Caco-2 (cell line): ENCODE measurements at regions of chr16 and their contacts with region 1.

Region 1: GRCh38 chr16:85420501-85421337 is 192.4 kb upstream of the GSE1 start:
- DNase-seq: peak; percentile 39 to 67
- H3K4me3 ChIP-seq: no peak overlapping the region
- H3K4me3 Mint-ChIP-seq: no peak overlapping the region
- H3K27ac Mint-ChIP-seq: peak overlapping the region; percentile 49
- H3K4me1 ChIP-seq: peaks cover 39% of the 10 kb centered on the region
- H3K4me1 Mint-ChIP-seq: peaks cover 10% of the 10 kb centered on the region
- H3K27me3 ChIP-seq: no peaks in the 10 kb centered on the region
- H3K27me3 Mint-ChIP-seq: no peaks in the 10 kb centered on the region
- CTCF ChIP-seq: peak; percentile 75 to 98

Region 2: GRCh38 chr16:85137323-85138072 is 283.2 kb before region 1 on chr16:
- CTCF ChIA-PET with region 1: no interaction called
- POLR2A ChIA-PET with region 1: no interaction called
- intact Hi-C with region 1: no loop called
- DNase-seq: peak; percentile 81
- H3K4me3 ChIP-seq: no peak overlapping the region
- H3K4me3 Mint-ChIP-seq: peak overlapping the region; percentile 67
- H3K27ac Mint-ChIP-seq: peak overlapping the region; percentile 19
- H3K4me1 ChIP-seq: peaks cover 13% of the 10 kb centered on the region
- H3K4me1 Mint-ChIP-seq: peaks cover 24% of the 10 kb centered on the region
- H3K27me3 ChIP-seq: no peaks in the 10 kb centered on the region
- H3K27me3 Mint-ChIP-seq: no peaks in the 10 kb centered on the region
- CTCF ChIP-seq: no peak

Region 3: GRCh38 chr16:85437166-85438055 is 16.7 kb after region 1 on chr16:
- CTCF ChIA-PET with region 1: interaction called, 59 read pairs
- POLR2A ChIA-PET with region 1: interaction called, 25 read pairs
- intact Hi-C with region 1: loop called (anchors 1 kb)
- DNase-seq: peak; percentile 89 to 93
- H3K4me3 ChIP-seq: peak overlapping the region; percentile 29
- H3K4me3 Mint-ChIP-seq: peak overlapping the region; percentile 76
- H3K27ac Mint-ChIP-seq: peak overlapping the region; percentile 92
- H3K4me1 ChIP-seq: peaks cover 43% of the 10 kb centered on the region
- H3K4me1 Mint-ChIP-seq: peaks cover 17% of the 10 kb centered on the region
- H3K27me3 ChIP-seq: no peaks in the 10 kb centered on the region
- H3K27me3 Mint-ChIP-seq: no peaks in the 10 kb centered on the region
- CTCF ChIP-seq: no peak

Region 4: DNA sequence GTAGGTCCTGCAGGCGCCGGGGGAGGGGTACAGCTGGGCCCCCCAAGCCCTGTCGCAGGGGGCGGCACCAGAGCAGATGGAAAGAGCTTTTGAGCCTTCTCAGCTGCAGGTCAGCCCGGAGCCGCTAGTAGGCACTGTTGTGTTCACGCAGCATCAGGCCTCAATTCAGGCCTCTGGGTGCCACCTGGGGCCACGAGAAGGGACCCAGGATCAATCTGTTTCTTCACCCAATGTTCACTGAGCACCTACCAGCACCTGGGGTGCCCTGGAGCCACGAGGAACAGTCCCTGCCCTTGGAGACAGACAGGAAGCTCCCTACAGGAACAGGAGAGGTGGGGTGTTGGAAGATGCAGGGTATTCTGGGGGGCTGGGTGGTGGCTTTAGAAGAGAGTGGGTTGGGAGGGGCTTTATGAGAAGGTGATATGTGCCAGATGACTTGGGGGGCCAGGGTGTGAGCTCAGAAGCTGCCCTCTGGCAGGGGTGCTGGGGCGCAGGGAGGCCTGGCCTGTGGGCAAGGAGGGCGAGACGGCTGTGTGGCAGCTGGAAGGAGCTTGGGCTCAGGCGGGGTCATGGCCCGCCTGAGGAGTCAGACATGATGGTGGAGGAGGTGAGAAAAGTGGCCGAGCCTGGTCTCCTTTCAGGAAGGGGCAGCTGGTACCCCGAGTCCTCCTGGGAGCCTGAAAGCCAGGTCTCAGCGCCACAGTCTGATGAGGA is 70.5 kb after region 1 on chr16:
- CTCF ChIA-PET with region 1: interaction called, 6 read pairs
- POLR2A ChIA-PET with region 1: no interaction called
- intact Hi-C with region 1: loop called (anchors 1 kb)
- DNase-seq: peak in 1 of 2 experiments; percentile 34
- H3K4me3 ChIP-seq: no peak overlapping the region
- H3K4me3 Mint-ChIP-seq: peak overlapping the region; percentile 62
- H3K27ac Mint-ChIP-seq: peak overlapping the region; percentile 88
- H3K4me1 ChIP-seq: peaks cover 30% of the 10 kb centered on the region
- H3K4me1 Mint-ChIP-seq: peaks cover 34% of the 10 kb centered on the region
- H3K27me3 ChIP-seq: no peaks in the 10 kb centered on the region
- H3K27me3 Mint-ChIP-seq: no peaks in the 10 kb centered on the region
- CTCF ChIP-seq: peak; percentile 40 to 63

Region 5: DNA sequence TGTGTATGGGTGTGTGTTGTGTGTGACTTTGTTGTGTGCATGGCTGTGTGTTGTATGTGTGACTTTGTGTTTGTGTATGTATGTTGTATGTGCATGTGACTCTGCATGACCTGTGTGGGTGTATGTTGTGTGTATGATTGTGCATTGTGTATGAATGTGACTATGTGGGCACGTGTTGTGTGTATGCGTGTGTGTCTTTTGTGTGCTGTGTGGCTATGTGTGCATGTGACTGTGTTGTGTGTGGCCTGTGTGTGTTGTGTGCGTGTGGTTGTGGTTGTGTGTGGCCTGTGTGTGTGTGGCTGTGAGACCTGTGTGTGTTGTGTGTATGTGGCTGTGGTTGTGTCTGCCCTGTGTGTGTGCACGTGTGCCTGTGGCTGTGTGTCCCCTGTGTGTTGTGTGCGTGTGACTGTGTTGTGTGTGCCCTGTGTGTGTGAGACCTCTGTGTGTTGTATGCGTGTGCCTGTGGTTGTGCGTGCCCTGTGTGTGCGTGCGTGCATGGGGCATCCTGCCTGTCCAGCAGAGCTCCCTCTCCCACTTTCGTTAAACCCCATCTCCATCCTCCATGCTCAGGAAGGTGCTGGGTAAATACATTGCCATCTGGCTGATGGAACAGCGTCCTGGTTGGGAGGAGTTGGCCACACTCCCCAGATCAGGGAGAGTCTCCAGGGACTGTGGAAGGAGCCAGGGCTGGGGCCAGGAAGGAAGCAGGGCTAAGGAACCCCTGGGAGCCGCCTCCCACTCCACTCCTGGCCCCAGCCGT is 102.3 kb after region 1 on chr16:
- CTCF ChIA-PET with region 1: interaction called, 4 read pairs
- POLR2A ChIA-PET with region 1: no interaction called
- intact Hi-C with region 1: loop called (anchors 1 kb)
- DNase-seq: no peak
- H3K4me3 ChIP-seq: no peak overlapping the region
- H3K4me3 Mint-ChIP-seq: peak overlapping the region; percentile 33
- H3K27ac Mint-ChIP-seq: peak overlapping the region; percentile 89
- H3K4me1 ChIP-seq: peaks cover 82% of the 10 kb centered on the region
- H3K4me1 Mint-ChIP-seq: peaks cover 53% of the 10 kb centered on the region
- H3K27me3 ChIP-seq: no peaks in the 10 kb centered on the region
- H3K27me3 Mint-ChIP-seq: no peaks in the 10 kb centered on the region
- CTCF ChIP-seq: no peak

Region 6: GRCh38 chr16:85615852-85616606 is 195.3 kb after region 1 on chr16:
- CTCF ChIA-PET with region 1: interaction called, 20 read pairs
- POLR2A ChIA-PET with region 1: interaction called, 4 read pairs
- intact Hi-C with region 1: no loop called
- DNase-seq: peak; percentile 71 to 79
- H3K4me3 ChIP-seq: no peak overlapping the region; the same call in 1 of the 2 replicates
- H3K4me3 Mint-ChIP-seq: peak overlapping the region; percentile 81
- H3K27ac Mint-ChIP-seq: peak overlapping the region; percentile 85
- H3K4me1 ChIP-seq: peaks cover 21% of the 10 kb centered on the region
- H3K4me1 Mint-ChIP-seq: peaks cover 26% of the 10 kb centered on the region
- H3K27me3 ChIP-seq: no peaks in the 10 kb centered on the region
- H3K27me3 Mint-ChIP-seq: no peaks in the 10 kb centered on the region
- CTCF ChIP-seq: peak; percentile 88 to 90